GM12878 (cell line): ENCODE measurements at regions of chr12 and their contacts with region 1.

Region 1: GRCh38 chr12:85029456-85029855 is 6.6 kb downstream of the TSPAN19 start:
- DNase-seq: no peak
- ATAC-seq: 0 out of 3 replicates have a peak, but pooled peaks have one; percentile 34
- H3K4me3 ChIP-seq: no peak overlapping the region
- H3K27ac ChIP-seq: no peak overlapping the region
- H3K4me1 ChIP-seq: no peaks in the 10 kb centered on the region
- H3K27me3 ChIP-seq: no peaks in the 10 kb centered on the region
- CTCF ChIP-seq: peak in 2 of 3 experiments; percentile 20 to 44; a peak in 2 of 6 replicates
- EP300 ChIP-seq: no peak
- POLR2A ChIP-seq: no peak
- RAD21 ChIP-seq: peak; percentile 44

Region 2: DNA sequence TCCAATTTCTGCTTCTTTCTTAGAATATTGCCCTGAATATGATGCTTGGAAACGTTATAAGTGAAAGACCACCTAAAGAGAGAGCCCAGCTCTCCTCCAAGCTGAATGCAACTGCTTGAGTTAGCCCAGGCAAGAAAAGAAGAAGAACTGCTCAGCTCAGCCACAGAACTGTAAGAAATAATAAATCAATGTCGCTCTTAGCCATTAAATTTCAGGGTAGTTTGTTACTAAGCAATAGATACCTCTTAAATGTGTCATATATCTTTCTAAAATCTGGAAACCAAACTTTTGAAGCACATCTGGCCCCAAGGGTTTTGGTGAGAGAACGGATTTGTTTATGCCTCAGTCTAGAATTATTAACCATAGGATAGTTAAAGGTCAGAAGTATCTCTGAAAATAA is 167.3 kb before region 1 on chr12:
- CTCF ChIA-PET with region 1: interaction called, 11 read pairs
- POLR2A ChIA-PET with region 1: no interaction called
- RAD21 ChIA-PET with region 1: no interaction called
- SMC1A ChIA-PET with region 1: no interaction called
- in situ Hi-C with region 1: no loop called
- intact Hi-C with region 1: no loop called
- DNase-seq: no peak
- ATAC-seq: no peak
- H3K4me3 ChIP-seq: no peak overlapping the region
- H3K27ac ChIP-seq: no peak overlapping the region
- H3K4me1 ChIP-seq: no peaks in the 10 kb centered on the region
- H3K27me3 ChIP-seq: no peaks in the 10 kb centered on the region
- CTCF ChIP-seq: no peak
- EP300 ChIP-seq: no peak
- POLR2A ChIP-seq: no peak
- RAD21 ChIP-seq: no peak

Region 3: GRCh38 chr12:85855305-85855704 is 825.8 kb after region 1 on chr12:
- CTCF ChIA-PET with region 1: no interaction called
- POLR2A ChIA-PET with region 1: no interaction called
- RAD21 ChIA-PET with region 1: no interaction called
- SMC1A ChIA-PET with region 1: no interaction called
- in situ Hi-C with region 1: no loop called
- intact Hi-C with region 1: no loop called
- DNase-seq: no peak
- ATAC-seq: no peak
- H3K4me3 ChIP-seq: no peak overlapping the region
- H3K27ac ChIP-seq: no peak overlapping the region
- H3K4me1 ChIP-seq: no peaks in the 10 kb centered on the region
- H3K27me3 ChIP-seq: no peaks in the 10 kb centered on the region
- CTCF ChIP-seq: no peak
- EP300 ChIP-seq: no peak
- POLR2A ChIP-seq: no peak
- RAD21 ChIP-seq: no peak